B cell (primary cell): ENCODE measurements at regions of chr3 and their contacts with region 1.

Region 1: DNA sequence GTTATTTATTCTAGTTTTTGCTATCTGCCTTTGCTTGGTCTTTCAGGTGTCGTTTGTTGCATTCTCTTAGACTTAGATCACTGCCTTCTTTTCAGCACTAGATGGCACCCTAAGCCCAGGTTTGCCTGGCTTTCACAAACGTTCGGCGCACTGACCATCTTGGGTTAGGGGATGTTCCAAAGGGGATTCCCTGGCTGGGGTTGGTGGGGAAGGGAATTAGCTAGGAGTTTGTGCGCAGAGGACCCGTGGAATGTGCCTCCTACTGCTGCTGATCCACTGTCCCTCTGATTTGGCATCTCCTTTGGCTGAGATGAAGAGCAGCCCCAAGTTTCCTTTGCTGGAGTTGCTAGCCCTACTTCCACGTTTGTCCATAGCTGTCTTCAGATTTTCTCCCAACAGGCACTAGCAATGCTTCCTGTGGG is 33.9 kb downstream of the PFN2 start:
- DNase-seq: peak; percentile 54
- ATAC-seq: no peak
- H3K4me3 ChIP-seq: no peak overlapping the region
- H3K4me3 Mint-ChIP-seq: no peak overlapping the region
- H3K27ac ChIP-seq: no peak overlapping the region
- H3K27ac Mint-ChIP-seq: no peak overlapping the region
- H3K4me1 ChIP-seq: no peaks in the 10 kb centered on the region
- H3K4me1 Mint-ChIP-seq: peaks cover 12% of the 10 kb centered on the region
- H3K27me3 ChIP-seq: no peaks in the 10 kb centered on the region
- H3K27me3 Mint-ChIP-seq: no peaks in the 10 kb centered on the region
- CTCF ChIP-seq: peak; percentile 74

Region 2: DNA sequence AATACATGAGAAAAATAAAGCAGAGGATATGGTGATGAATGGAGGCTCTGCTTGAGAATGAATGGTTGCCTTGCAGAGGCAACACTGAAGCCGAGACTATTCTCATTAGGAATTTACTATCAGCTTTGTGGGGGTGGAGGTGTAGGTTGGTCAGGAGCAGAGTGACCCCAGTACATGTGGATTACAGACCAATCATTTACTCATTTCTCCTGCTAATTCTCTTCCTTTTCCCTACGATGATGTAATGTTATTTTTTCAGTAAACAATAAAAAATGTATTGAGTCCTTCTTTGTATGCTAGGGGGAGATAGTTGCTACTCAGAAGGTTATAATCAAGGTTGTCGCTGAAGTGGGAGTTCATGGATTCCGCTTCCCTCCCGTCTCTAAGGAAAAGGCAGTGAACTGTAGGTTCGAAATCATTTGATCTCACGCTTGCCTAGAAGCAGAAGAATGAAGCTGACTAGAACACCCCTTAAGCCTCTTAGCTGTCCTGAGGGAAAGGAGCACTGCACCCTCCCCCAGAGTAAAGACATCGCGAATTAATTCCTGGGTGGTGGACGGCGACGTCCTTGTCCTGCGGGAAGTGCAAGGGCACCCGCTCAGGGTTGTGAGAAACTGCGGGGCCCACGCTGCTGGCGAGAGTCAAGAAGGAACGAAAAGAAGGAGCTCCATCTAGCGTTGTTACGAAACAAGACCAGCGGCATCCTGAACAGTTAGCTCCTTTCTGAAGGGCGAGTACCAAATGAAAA is 247.0 kb after region 1 on chr3:
- CTCF ChIA-PET with region 1: interaction called, 27 read pairs
- POLR2A ChIA-PET with region 1: no interaction called
- intact Hi-C with region 1: loop called (anchors 1 kb)
- DNase-seq: peak; percentile 53
- ATAC-seq: peak; percentile 60
- H3K4me3 ChIP-seq: peak overlapping the region in 2 of 5 experiments; percentile 11 to 21
- H3K4me3 Mint-ChIP-seq: no peak overlapping the region
- H3K27ac ChIP-seq: no peak overlapping the region
- H3K27ac Mint-ChIP-seq: no peak overlapping the region
- H3K4me1 ChIP-seq: peaks cover 7 to 8% of the 10 kb centered on the region in 2 donors
- H3K4me1 Mint-ChIP-seq: no peaks in the 10 kb centered on the region
- H3K27me3 ChIP-seq: peaks cover 0 to 9% (median 2%) of the 10 kb centered on the region in 4 experiments
- H3K27me3 Mint-ChIP-seq: peaks cover 17% of the 10 kb centered on the region
- CTCF ChIP-seq: peak; percentile 51